ENCODE measurements at regions of chr1 and their contacts with region 1.

Region 1: GRCh38 chr1:77978969-77979876 is at the start of gene FUBP1:
- DNase-seq: peak; percentile 91 to 99 (median 94)
- ATAC-seq: peak; percentile 75
- H3K4me3 ChIP-seq: peak within 1 kb of the TSS; percentile 88 to 99
- H3K4me3 Mint-ChIP-seq: no peak within 1 kb of the TSS
- H3K27ac ChIP-seq: peak within 1 kb of the TSS; percentile 98 to 100
- H3K27ac Mint-ChIP-seq: no peak within 1 kb of the TSS
- H3K4me1 ChIP-seq: peaks cover 45% of the 10 kb centered on the region
- H3K4me1 Mint-ChIP-seq: peaks cover 45% of the 10 kb centered on the region
- H3K27me3 ChIP-seq: no peaks in the 10 kb centered on the region
- H3K27me3 Mint-ChIP-seq: no peaks in the 10 kb centered on the region
- CTCF ChIP-seq: peak; percentile 75
- total RNA-seq, gene FUBP1: 212 to 217 TPM

Region 2: DNA sequence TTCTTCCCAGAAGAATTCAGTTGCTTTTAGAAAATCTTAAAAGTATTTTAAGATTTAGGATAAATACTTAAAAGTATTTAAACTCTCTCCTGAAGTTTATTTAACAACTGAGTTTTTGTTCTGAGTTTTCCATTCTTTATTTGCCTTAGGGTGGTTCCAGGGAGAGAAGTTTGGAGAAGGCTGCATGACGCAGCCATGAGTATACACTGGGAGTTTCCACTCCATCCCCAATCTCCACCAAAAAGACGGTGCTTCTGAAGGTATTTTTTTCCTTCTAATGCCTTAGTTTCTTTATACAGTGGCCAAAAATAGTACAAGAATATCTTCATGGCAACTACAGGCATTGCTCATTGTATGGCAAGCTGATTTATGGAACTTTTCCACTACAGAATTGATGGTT is 989.2 kb before region 1 on chr1:
- CTCF ChIA-PET with region 1: no interaction called
- POLR2A ChIA-PET with region 1: no interaction called
- intact Hi-C with region 1: no loop called
- DNase-seq: no peak
- ATAC-seq: no peak
- H3K4me3 ChIP-seq: no peak overlapping the region
- H3K4me3 Mint-ChIP-seq: no peak overlapping the region
- H3K27ac ChIP-seq: no peak overlapping the region
- H3K27ac Mint-ChIP-seq: no peak overlapping the region
- H3K4me1 ChIP-seq: no peaks in the 10 kb centered on the region
- H3K4me1 Mint-ChIP-seq: no peaks in the 10 kb centered on the region
- H3K27me3 ChIP-seq: no peaks in the 10 kb centered on the region
- H3K27me3 Mint-ChIP-seq: peaks cover 5% of the 10 kb centered on the region
- CTCF ChIP-seq: no peak

Region 3: DNA sequence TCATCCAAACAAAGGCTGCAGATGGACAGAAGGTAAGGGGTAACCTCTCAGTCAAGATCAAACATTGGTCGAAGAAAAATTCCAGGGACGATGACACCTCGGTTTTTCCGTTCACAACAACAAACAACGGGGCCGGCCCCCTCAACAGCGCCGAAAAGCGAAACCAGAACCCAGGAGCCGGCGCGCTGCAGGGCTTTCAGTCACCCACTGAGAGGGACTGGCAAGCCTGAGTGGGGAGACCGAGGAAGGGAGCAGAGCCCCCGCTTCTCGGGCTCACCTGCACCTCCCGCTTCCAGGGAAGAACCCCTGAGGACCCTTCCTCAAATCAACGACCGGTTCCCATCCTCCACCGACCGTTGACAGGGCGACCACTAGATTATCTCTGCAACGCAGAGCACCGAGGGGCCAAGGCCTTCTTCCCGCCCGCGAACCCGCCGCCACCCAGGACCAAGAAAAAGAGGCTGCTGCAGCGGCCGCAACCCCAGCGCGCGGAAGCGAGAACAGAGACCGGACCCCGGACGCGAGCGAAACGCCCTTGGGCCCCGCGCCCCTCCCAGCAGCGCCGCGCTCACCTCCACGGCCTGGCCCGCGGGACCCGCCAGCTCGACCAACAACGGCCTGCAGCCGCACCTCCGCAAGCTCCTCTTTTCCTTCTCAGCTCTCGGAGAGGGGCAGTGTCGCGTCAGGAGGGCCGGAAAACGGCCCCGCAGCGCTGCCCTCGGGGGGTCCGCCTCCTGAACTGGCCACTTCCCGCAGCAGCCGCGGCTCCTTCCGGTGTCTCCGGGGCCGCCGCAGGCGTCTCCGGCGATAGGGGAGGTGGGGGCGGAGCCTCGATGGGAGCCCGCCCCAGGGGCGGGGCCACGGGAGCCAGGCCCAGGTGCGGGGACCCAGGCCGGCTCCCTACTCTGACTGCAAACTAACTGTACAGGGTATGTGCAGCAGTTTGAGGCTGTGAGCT is 219.9 kb before region 1 on chr1 and contains the start of gene USP33:
- CTCF ChIA-PET with region 1: no interaction called
- POLR2A ChIA-PET with region 1: interaction called, 20 read pairs
- intact Hi-C with region 1: loop called (anchors 2 to 5 kb)
- DNase-seq: peak; percentile 81 to 96 (median 89)
- ATAC-seq: peak; percentile 95
- H3K4me3 ChIP-seq: peak within 1 kb of the TSS; percentile 79 to 98
- H3K4me3 Mint-ChIP-seq: peak within 1 kb of the TSS; percentile 90
- H3K27ac ChIP-seq: peak within 1 kb of the TSS; percentile 70 to 88
- H3K27ac Mint-ChIP-seq: peak within 1 kb of the TSS; percentile 90
- H3K4me1 ChIP-seq: peaks cover 44% of the 10 kb centered on the region
- H3K4me1 Mint-ChIP-seq: peaks cover 45% of the 10 kb centered on the region
- H3K27me3 ChIP-seq: no peaks in the 10 kb centered on the region
- H3K27me3 Mint-ChIP-seq: no peaks in the 10 kb centered on the region
- CTCF ChIP-seq: no peak
- total RNA-seq, gene USP33: 72.1 to 72.2 TPM

Region 4: GRCh38 chr1:77779529-77780281 is 199.5 kb before region 1 on chr1 and contains the start of gene MIGA1:
- CTCF ChIA-PET with region 1: no interaction called
- POLR2A ChIA-PET with region 1: interaction called, 9 read pairs
- intact Hi-C with region 1: loop called (anchors 1 to 2 kb)
- DNase-seq: peak; percentile 73 to 96 (median 89)
- ATAC-seq: peak; percentile 97
- H3K4me3 ChIP-seq: peak within 1 kb of the TSS; percentile 86 to 90
- H3K4me3 Mint-ChIP-seq: peak within 1 kb of the TSS; percentile 97
- H3K27ac ChIP-seq: peak within 1 kb of the TSS; percentile 61 to 65
- H3K27ac Mint-ChIP-seq: peak within 1 kb of the TSS; percentile 90
- H3K4me1 ChIP-seq: peaks cover 28% of the 10 kb centered on the region
- H3K4me1 Mint-ChIP-seq: peaks cover 41% of the 10 kb centered on the region
- H3K27me3 ChIP-seq: no peaks in the 10 kb centered on the region
- H3K27me3 Mint-ChIP-seq: no peaks in the 10 kb centered on the region
- CTCF ChIP-seq: no peak
- total RNA-seq, gene MIGA1: 11.8 to 13.5 TPM

Region 5: GRCh38 chr1:77954521-77954920 is 24.7 kb before region 1 on chr1:
- CTCF ChIA-PET with region 1: no interaction called
- POLR2A ChIA-PET with region 1: interaction called, 3 read pairs
- intact Hi-C with region 1: loop called (anchors 2 kb)
- DNase-seq: no peak
- ATAC-seq: no peak
- H3K4me3 ChIP-seq: no peak overlapping the region
- H3K4me3 Mint-ChIP-seq: no peak overlapping the region
- H3K27ac ChIP-seq: no peak overlapping the region
- H3K27ac Mint-ChIP-seq: no peak overlapping the region
- H3K4me1 ChIP-seq: no peaks in the 10 kb centered on the region
- H3K4me1 Mint-ChIP-seq: peaks cover 25% of the 10 kb centered on the region
- H3K27me3 ChIP-seq: no peaks in the 10 kb centered on the region
- H3K27me3 Mint-ChIP-seq: no peaks in the 10 kb centered on the region
- CTCF ChIP-seq: no peak

Region 6: DNA sequence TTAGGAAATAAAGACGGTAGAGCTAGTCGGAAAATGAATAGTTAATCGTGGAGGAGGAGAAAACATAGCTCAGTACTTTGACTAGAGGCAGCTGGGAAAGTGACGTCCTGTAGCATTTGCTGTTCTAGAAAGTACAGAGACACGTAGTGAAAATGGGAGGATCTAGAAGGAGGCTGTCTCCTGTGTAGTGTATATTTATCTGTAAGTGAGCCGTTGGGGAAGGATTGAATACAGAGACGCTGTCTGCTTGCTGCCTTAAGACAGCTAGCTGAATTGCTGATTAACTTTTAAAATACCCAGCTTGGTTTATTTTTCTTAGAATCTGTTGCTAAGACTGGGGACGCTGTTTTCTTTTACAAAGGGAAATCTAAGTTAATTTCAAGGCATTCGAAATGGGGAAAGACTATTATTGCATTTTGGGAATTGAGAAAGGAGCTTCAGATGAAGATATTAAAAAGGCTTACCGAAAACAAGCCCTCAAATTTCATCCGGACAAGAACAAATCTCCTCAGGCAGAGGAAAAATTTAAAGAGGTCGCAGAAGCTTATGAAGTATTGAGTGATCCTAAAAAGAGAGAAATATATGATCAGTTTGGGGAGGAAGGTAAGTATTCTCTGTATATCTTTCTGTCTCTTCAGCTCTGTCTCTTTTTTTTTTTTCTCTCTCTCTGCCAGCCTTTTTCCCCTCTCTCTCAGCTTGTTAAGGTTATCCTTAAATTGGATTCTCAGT is 25.7 kb after region 1 on chr1 and contains the start of gene DNAJB4:
- CTCF ChIA-PET with region 1: interaction called, 14 read pairs
- POLR2A ChIA-PET with region 1: interaction called, 148 read pairs
- intact Hi-C with region 1: loop called (anchors 1 kb)
- DNase-seq: peak; percentile 20 to 94 (median 60)
- ATAC-seq: peak; percentile 98
- H3K4me3 ChIP-seq: peak within 1 kb of the TSS; percentile 53 to 71
- H3K4me3 Mint-ChIP-seq: peak within 1 kb of the TSS; percentile 93
- H3K27ac ChIP-seq: peak within 1 kb of the TSS; percentile 96 to 98
- H3K27ac Mint-ChIP-seq: peak within 1 kb of the TSS; percentile 99
- H3K4me1 ChIP-seq: peaks cover 16% of the 10 kb centered on the region
- H3K4me1 Mint-ChIP-seq: peaks cover 49% of the 10 kb centered on the region
- H3K27me3 ChIP-seq: no peaks in the 10 kb centered on the region
- H3K27me3 Mint-ChIP-seq: no peaks in the 10 kb centered on the region
- CTCF ChIP-seq: no peak
- total RNA-seq, gene DNAJB4: 13.3 to 13.4 TPM

Region 7: DNA sequence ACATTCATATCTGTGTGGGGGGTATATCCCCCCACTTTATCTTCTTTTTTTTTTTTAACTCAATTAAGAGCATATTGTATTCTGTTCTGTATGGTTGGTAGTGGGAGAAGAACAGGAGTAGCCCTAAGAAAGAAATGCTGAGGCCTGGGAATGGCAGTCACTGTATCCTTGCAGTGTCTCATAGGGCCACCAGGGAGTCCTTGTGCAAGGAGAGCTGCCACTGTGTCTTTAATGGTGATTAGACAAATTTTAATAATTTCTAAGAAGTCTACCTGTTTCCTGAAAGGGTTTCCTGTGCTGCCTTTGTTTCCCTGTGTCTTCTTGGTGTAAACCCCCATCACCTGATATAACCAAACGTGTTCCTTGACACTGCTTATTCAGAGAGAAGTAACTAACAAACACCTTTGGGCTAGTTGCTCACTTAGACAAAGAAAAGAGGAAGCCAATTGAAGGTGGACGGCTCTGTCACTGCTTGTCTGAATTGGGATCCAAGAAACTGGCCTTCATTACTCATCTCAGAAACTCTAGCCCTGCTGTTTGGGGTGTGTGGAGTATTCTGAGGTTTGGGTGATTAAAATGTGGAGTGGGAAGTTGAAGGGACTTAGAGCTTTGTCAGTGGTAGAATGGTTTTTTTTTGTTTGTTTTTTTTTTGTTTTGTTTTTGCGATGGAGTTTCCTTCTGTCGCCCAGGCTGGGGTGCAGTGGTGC is 81.8 kb after region 1 on chr1:
- CTCF ChIA-PET with region 1: no interaction called
- POLR2A ChIA-PET with region 1: no interaction called
- intact Hi-C with region 1: no loop called
- DNase-seq: no peak
- ATAC-seq: no peak
- H3K4me3 ChIP-seq: no peak overlapping the region
- H3K4me3 Mint-ChIP-seq: no peak overlapping the region
- H3K27ac ChIP-seq: no peak overlapping the region
- H3K27ac Mint-ChIP-seq: no peak overlapping the region
- H3K4me1 ChIP-seq: no peaks in the 10 kb centered on the region
- H3K4me1 Mint-ChIP-seq: no peaks in the 10 kb centered on the region
- H3K27me3 ChIP-seq: no peaks in the 10 kb centered on the region
- H3K27me3 Mint-ChIP-seq: peaks cover 2% of the 10 kb centered on the region
- CTCF ChIP-seq: no peak

Region 8: GRCh38 chr1:78491451-78492071 is 512.3 kb after region 1 on chr1:
- CTCF ChIA-PET with region 1: no interaction called
- POLR2A ChIA-PET with region 1: no interaction called
- intact Hi-C with region 1: no loop called
- DNase-seq: no peak
- ATAC-seq: no peak
- H3K4me3 ChIP-seq: no peak overlapping the region
- H3K4me3 Mint-ChIP-seq: no peak overlapping the region
- H3K27ac ChIP-seq: no peak overlapping the region
- H3K27ac Mint-ChIP-seq: no peak overlapping the region
- H3K4me1 ChIP-seq: no peaks in the 10 kb centered on the region
- H3K4me1 Mint-ChIP-seq: peaks cover 2% of the 10 kb centered on the region
- H3K27me3 ChIP-seq: peaks cover 0 to 2% of the 10 kb centered on the region in 2 experiments
- H3K27me3 Mint-ChIP-seq: peaks cover 32% of the 10 kb centered on the region
- CTCF ChIP-seq: no peak

Region 9: DNA sequence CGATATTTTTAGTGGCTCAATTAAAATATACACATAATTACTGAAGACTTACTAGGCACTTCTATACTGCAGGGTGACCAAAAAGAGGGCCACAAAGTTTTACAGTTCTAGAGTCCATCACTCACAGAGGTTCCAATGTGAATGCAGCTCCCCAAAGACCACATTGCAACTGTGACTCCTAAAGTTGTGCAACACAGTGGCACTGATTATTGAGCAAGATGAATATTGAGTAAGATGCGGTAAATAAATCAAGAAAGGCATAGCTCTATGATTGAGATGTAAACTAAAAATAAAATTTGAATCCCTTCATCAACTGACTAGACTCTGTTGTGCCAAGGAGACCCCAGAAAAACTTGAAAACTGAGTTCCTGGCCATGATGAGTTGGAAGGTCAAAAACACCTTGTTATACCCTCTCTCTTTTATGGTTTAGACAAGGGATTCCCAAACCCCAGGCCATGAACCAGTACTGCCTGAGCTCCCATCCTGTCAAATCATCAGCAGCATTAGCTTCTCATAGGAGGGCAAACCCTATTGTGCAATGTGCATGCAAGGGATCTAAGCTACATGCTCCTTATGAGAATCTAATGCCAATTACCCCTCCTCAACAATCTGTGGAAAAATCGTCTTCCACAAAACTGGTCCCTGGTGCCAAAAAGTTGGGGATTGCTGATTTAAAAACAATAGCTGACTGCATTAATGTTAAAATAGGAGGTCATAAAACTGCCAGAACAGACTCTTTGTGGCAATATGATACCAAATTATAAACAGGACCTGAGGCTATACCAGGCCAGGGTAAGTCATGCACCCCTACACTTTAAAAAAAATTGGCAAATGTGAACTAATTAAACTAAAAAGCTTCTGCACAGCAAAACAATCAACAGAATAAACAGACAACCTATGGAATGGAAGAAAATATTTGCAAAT is 933.0 kb after region 1 on chr1:
- CTCF ChIA-PET with region 1: no interaction called
- POLR2A ChIA-PET with region 1: no interaction called
- intact Hi-C with region 1: no loop called
- DNase-seq: no peak
- ATAC-seq: no peak
- H3K4me3 ChIP-seq: no peak overlapping the region
- H3K4me3 Mint-ChIP-seq: no peak overlapping the region
- H3K27ac ChIP-seq: no peak overlapping the region
- H3K27ac Mint-ChIP-seq: no peak overlapping the region
- H3K4me1 ChIP-seq: no peaks in the 10 kb centered on the region
- H3K4me1 Mint-ChIP-seq: no peaks in the 10 kb centered on the region
- H3K27me3 ChIP-seq: no peaks in the 10 kb centered on the region
- H3K27me3 Mint-ChIP-seq: no peaks in the 10 kb centered on the region
- CTCF ChIP-seq: no peak